ENCODE measurements at regions of chr4 and their contacts with region 1.

Region 1: DNA sequence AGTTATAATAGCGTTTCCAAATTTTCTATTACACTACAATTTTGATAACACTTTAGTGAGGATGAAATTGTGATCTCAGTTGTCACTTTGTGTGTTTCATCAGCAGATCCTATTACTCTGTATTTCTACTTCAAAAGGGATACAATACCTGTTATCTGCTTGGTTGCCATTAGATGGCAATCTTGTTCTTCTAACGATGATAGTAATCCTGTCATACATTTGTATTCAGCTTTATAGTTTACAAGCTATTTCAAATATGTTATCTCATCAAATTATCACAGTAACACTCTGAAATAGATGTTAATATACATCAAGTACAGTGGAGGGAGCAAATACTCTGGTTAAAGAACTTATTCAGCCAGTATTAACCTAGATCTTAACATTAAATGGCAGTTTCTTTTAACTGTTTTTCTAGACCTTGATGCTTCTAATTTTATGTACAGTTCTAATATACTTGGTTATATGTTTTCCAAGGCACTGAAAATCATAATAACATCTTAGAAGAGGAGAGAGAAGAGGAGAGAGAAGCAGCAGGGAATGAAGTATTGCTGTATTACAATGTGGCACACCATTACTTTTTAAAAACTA is 292.0 kb downstream of the CCSER1 start:
- DNase-seq: no peak
- H3K4me3 ChIP-seq: no peak overlapping the region
- H3K27ac ChIP-seq: no peak overlapping the region
- H3K4me1 ChIP-seq: no peaks in the 10 kb centered on the region
- H3K27me3 ChIP-seq: no peaks in the 10 kb centered on the region
- CTCF ChIP-seq: peak; percentile 32 to 49 (median 33)
- EP300 ChIP-seq: no peak
- POLR2A ChIP-seq: no peak

Region 2: GRCh38 chr4:89681215-89681614 is 738.0 kb before region 1 on chr4:
- in situ Hi-C with region 1: no loop called
- intact Hi-C with region 1: no loop called
- DNase-seq: no peak
- H3K4me3 ChIP-seq: no peak overlapping the region
- H3K27ac ChIP-seq: no peak overlapping the region
- H3K4me1 ChIP-seq: no peaks in the 10 kb centered on the region
- H3K27me3 ChIP-seq: no peaks in the 10 kb centered on the region
- CTCF ChIP-seq: no peak
- EP300 ChIP-seq: no peak
- POLR2A ChIP-seq: no peak

Region 3: GRCh38 chr4:92387459-92388069 is 1968.3 kb after region 1 on chr4:
- in situ Hi-C with region 1: loop called in 2 of 4 experiments (anchors 25 kb)
- intact Hi-C with region 1: no loop called
- DNase-seq: no peak
- H3K4me3 ChIP-seq: no peak overlapping the region
- H3K27ac ChIP-seq: no peak overlapping the region
- H3K4me1 ChIP-seq: no peaks in the 10 kb centered on the region
- H3K27me3 ChIP-seq: no peaks in the 10 kb centered on the region
- CTCF ChIP-seq: peak in 4 of 5 experiments; percentile 32 to 49 (median 40)
- EP300 ChIP-seq: no peak
- POLR2A ChIP-seq: no peak